Sigmoid colon (tissue), 7 donors: ENCODE measurements at regions of chr10 and their contacts with region 1.

Region 1: DNA sequence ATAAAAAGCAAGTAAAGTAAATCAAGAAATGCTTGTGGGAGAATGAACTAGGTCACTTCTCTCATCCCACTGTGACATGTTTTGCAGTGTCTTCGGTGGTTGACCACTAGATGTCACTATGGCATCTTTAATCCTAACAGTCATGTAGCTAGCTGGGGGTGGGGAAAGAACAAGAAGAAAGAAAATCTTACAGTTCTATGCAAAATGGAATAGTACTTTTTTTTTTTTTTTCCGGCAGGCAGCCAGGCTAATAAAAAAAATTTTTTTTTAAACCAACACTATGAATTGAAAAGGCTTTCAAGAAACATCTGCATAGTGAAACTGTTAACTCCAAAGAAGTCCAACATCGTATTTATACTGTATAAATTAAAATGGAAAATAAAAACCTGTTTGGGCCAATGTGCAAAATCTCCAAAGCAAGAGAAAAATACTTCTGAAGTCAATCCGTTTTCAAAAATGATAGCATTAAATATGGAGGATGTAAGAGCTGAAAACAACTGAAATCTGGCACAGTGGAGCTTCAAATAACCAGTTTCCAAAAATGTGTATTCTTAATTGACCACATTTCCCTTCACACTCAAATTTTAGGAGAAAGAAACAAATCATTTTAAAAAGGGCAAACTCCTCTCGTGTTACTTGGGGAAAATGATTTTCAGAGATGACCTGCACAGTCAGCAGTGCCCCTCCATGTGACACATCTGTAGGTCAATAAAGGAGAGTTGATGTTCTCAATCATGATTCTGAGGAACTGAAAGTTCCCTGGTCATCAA is 38.5 kb downstream of the CDK1 start:
- DNase-seq: peak; percentile 71
- H3K4me3 ChIP-seq: peak overlapping the region in 1 of 4 donors; percentile 5
- H3K27ac ChIP-seq: peak overlapping the region in 3 of 4 donors; percentile 24 to 56 (median 56)
- H3K4me1 ChIP-seq: peaks cover 0 to 40% (median 27%) of the 10 kb centered on the region in 4 donors
- H3K27me3 ChIP-seq: no peaks in the 10 kb centered on the region
- CTCF ChIP-seq: peak; percentile 64 to 77 (median 69)
- EP300 ChIP-seq: peak in 1 of 4 donors; percentile 1
- POLR2A ChIP-seq: no peak

Region 2: DNA sequence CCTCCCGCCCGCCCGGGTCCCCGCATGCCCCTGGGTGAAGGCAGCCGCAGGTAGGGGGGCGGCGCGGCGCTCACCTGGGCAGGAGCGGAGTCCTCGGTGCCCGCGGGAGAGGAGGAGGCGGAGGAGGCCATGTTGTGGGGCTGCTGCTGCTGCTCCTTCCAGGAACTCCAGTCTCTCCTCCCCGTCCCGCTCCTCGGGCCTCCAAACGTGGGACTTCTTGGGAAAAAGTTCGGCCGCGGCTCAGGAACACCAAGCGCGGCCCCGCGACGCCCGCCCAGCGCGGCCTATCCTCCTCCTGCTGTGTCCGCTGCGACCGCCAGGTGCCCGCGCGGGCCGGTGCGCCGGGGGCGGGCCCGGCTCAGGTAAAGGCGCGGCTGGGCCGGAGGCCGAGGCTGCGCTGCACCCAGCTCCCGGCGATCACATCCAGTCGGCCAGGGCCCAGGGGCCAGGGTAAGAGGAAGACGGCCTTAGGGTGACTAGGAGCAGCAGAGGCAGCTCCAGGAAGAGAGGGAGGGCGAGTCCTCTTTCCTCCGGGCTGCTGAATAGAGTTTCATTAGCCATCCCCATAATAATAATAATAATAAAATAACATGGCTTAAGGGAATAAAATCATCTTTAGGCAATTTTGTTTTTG is 83.5 kb before region 1 on chr10:
- intact Hi-C with region 1: no loop called
- DNase-seq: no peak
- H3K4me3 ChIP-seq: peak overlapping the region; percentile 13 to 63 (median 50)
- H3K27ac ChIP-seq: peak overlapping the region in 2 of 4 donors; percentile 7 to 40
- H3K4me1 ChIP-seq: peaks cover 0 to 14% (median 11%) of the 10 kb centered on the region in 4 donors
- H3K27me3 ChIP-seq: peaks cover 12 to 40% (median 21%) of the 10 kb centered on the region in 3 donors
- CTCF ChIP-seq: no peak
- EP300 ChIP-seq: no peak
- POLR2A ChIP-seq: no peak

Region 3: DNA sequence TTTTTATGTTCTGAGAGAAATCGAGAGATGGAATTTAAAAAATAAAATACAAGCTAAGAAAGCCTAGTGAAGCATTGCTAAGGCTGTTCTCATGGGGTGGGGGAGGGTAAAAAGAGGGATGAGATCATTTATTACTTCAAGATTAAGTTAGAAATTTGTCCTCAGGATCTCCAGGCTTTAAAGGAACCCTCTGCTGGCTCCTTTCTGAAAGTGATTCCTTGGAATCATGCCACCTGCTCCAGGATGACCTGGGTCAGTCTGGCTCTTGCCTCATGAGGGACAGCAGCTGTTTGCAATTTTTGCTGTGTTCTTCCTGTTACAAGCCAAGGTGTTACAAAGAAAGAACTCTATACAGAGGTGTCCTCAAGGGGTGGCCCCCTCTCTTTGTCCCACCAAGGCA is 31.3 kb after region 1 on chr10:
- intact Hi-C with region 1: no loop called
- DNase-seq: no peak
- H3K4me3 ChIP-seq: no peak overlapping the region
- H3K27ac ChIP-seq: peak overlapping the region in 1 of 4 donors; percentile 28
- H3K4me1 ChIP-seq: peaks cover 0 to 9% (median 0%) of the 10 kb centered on the region in 4 donors
- H3K27me3 ChIP-seq: no peaks in the 10 kb centered on the region
- CTCF ChIP-seq: no peak
- EP300 ChIP-seq: no peak
- POLR2A ChIP-seq: no peak

Region 4: GRCh38 chr10:60883187-60883586 is 66.4 kb after region 1 on chr10:
- intact Hi-C with region 1: loop called (anchors 5 kb)
- DNase-seq: no peak
- H3K4me3 ChIP-seq: no peak overlapping the region
- H3K27ac ChIP-seq: no peak overlapping the region
- H3K4me1 ChIP-seq: peaks cover 0 to 4% (median 0%) of the 10 kb centered on the region in 4 donors
- H3K27me3 ChIP-seq: no peaks in the 10 kb centered on the region
- CTCF ChIP-seq: peak in 3 of 4 experiments; percentile 22 to 52 (median 28)
- EP300 ChIP-seq: no peak
- POLR2A ChIP-seq: no peak

Region 5: DNA sequence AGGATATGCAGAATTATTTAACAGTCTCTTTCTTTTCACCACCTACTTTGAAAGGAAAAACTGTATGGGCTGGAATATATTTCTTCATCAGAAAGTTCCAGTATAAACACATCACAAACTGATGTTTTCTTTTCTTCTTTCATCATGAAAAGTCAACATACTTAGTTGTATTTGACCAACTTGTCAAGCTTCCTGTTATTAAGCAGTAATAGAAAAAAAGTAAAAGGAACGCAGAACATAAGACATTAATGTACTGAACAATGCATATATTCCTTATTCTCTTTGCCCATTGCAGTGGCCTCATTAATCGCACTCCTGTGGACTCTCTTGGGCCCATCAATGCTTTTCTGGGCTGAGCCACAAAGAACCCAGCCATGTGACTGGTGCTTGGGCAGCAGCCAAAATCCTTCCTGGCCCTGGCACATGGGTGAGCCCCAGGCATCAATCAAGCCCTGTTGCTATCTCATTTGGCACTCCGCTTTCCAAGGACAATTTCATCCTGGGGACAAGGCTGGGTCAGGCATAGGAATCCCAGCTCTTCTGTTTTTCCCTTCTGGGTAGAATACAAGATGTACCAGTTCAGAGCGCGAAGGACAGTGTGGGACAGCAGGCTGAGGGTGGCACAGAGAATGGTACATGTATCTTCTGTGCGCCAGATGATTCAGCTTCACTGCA is 84.9 kb after region 1 on chr10:
- intact Hi-C with region 1: no loop called
- DNase-seq: no peak
- H3K4me3 ChIP-seq: no peak overlapping the region
- H3K27ac ChIP-seq: no peak overlapping the region
- H3K4me1 ChIP-seq: peaks cover 0 to 43% (median 32%) of the 10 kb centered on the region in 4 donors
- H3K27me3 ChIP-seq: no peaks in the 10 kb centered on the region
- CTCF ChIP-seq: no peak
- EP300 ChIP-seq: no peak
- POLR2A ChIP-seq: no peak

Region 6: DNA sequence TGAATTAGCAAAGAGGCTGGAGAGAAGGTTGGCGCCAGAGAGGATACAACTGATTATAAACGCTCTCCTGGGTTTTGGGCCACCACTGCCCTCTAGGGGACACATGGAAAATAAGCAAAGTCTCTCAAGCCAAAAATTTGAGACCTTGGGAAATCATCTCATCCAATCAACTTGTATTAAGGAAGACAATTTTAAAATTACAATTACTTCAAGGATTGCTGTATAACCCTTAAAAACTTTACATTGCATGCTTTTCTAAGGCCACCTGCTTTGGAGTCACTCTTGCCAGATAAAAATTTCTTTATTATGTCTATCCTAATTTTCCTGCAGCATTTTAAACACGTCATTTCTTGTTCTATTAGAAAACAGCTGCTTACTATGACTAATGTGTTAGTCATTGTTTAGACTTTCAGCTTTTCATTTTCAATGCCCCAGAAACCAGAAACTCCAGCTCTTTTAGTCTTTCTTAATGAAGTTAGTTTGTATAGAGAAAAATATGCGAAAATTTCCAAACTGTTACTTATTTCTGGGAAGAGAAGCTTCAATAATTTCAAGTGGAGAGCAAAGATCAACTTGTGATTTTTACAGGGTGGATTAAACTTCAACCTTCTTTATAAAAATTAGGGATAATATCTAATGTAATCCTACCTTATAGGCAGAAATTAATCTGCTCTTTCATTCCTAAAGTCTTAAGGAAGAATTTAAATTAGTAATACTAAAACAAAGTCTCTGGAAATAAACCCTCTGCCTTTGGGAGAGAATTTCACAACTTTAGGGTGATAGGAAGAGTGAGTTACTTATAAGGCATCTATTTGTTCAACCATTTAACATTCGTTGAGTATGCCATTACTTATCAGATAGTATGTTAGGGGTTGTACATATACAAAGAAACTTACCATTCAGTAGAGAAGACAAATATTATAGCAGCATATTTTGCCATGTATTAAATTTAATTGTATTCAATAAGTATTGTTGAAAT is 147.7 kb after region 1 on chr10:
- intact Hi-C with region 1: loop called (anchors 2 kb)
- DNase-seq: peak; percentile 91
- H3K4me3 ChIP-seq: no peak overlapping the region
- H3K27ac ChIP-seq: peak overlapping the region; percentile 32 to 54 (median 49)
- H3K4me1 ChIP-seq: peaks cover 0 to 13% (median 3%) of the 10 kb centered on the region in 4 donors
- H3K27me3 ChIP-seq: no peaks in the 10 kb centered on the region
- CTCF ChIP-seq: peak; percentile 40 to 81 (median 64)
- EP300 ChIP-seq: no peak
- POLR2A ChIP-seq: no peak

Region 7: DNA sequence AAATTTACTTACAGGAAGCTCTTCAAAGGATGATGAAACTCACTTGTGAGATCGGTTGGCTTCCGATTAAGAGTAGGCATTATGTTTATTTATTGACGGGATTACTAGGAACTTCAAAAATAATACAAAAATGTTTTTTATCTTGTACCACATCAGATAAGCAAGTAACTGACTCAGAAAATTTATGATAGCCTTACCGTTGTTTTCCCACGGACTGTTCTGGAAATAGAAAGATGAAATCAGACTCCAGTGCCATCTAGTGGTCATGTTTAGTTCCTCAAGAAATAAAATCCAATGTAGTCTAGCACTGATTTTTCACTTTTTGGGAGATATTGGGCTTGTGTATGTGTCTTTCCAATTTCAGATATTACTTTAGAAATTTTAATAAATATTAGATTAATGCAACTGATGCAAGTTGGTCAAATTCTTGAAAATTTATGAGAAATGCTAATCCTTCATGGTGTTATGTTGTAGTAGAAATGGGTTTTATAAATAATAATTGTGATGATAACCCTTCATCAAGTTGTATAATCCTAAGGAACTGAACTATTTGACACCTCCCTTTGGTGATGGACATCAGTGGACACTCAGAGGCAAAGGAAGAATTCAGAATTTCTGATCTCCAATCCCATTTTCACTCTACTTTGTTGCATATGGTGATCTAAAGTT is 467.5 kb after region 1 on chr10:
- intact Hi-C with region 1: loop called (anchors 2 kb)
- DNase-seq: no peak
- H3K4me3 ChIP-seq: no peak overlapping the region
- H3K27ac ChIP-seq: peak overlapping the region in 2 of 4 donors; percentile 8 to 26
- H3K4me1 ChIP-seq: peaks cover 0 to 11% (median 3%) of the 10 kb centered on the region in 4 donors
- H3K27me3 ChIP-seq: no peaks in the 10 kb centered on the region
- CTCF ChIP-seq: peak; percentile 49 to 81 (median 65)
- EP300 ChIP-seq: no peak
- POLR2A ChIP-seq: no peak

Region 8: GRCh38 chr10:61733358-61733940 is 916.6 kb after region 1 on chr10:
- intact Hi-C with region 1: loop called (anchors 5 kb)
- DNase-seq: no peak
- H3K4me3 ChIP-seq: no peak overlapping the region
- H3K27ac ChIP-seq: no peak overlapping the region
- H3K4me1 ChIP-seq: peaks cover 0 to 14% (median 9%) of the 10 kb centered on the region in 4 donors
- H3K27me3 ChIP-seq: no peaks in the 10 kb centered on the region
- CTCF ChIP-seq: peak in 2 of 4 experiments; percentile 27 to 47
- EP300 ChIP-seq: no peak
- POLR2A ChIP-seq: no peak

Region 9: GRCh38 chr10:62050893-62051433 is 1234.2 kb after region 1 on chr10:
- intact Hi-C with region 1: loop called (anchors 10 kb)
- DNase-seq: no peak
- H3K4me3 ChIP-seq: peak overlapping the region; percentile 53 to 65 (median 58)
- H3K27ac ChIP-seq: peak overlapping the region; percentile 89 to 95 (median 93)
- H3K4me1 ChIP-seq: peaks cover 0 to 78% (median 75%) of the 10 kb centered on the region in 4 donors
- H3K27me3 ChIP-seq: no peaks in the 10 kb centered on the region
- CTCF ChIP-seq: no peak
- EP300 ChIP-seq: peak in 3 of 4 donors; percentile 17 to 53 (median 23)
- POLR2A ChIP-seq: no peak

Region 10: DNA sequence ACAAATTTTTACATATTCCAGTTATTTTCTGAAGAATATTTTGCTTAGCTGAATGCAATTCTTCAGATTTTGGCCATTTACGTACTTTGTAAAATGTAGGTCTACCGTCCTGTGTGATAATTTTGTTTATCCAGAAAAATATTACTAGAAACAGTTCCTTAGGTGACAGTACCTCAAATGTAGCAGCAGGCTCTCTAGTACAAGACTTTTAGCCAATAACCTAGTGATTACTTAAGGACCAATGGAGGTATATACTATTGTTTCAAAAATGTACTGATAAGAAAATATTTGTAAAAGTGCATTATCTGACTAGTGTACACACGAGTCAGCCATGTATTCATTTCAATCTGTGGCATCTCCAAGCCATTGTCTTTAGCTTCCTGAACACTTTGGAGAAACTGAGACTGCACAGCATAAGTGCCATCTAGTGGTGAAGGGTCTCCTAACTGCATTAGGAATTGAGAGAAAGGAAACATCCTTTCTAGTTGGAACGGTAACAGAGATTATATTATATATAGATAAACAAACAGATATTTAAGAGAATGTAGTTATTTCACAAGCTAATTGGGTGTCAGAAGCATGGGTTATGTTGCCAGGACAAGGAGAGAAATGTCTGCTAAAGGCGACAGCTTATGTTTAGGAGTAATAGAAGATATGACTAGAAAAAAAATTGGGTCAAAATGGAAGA is 1428.1 kb after region 1 on chr10:
- intact Hi-C with region 1: loop called (anchors 10 kb)
- DNase-seq: no peak
- H3K4me3 ChIP-seq: no peak overlapping the region
- H3K27ac ChIP-seq: peak overlapping the region in 1 of 4 donors; percentile 32
- H3K4me1 ChIP-seq: peaks cover 0 to 23% (median 6%) of the 10 kb centered on the region in 4 donors
- H3K27me3 ChIP-seq: no peaks in the 10 kb centered on the region
- CTCF ChIP-seq: peak; percentile 75 to 89 (median 80)
- EP300 ChIP-seq: no peak
- POLR2A ChIP-seq: no peak